Pancreas (tissue), 10 donors: ENCODE measurements at regions of chr7 and their contacts with region 1.

Region 1: DNA sequence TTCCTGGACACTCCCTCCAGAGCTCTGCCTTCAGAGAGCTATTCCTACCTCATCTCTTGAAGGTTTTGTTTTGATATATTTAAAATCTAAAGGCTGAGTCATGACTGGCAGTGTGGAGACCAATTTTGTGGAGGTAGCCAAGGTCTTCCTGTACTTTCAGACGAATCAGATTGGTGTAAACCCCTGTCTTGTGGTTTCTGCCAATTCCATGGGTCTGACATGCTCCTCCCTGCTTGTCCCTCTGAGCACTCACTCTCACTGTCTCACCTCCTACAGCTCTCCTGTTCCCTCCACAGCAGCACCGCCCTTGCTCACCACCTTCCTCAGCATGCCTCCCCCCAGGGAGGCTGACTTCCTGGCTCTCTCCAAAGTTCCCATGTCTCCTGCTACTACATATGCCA is 179.8 kb downstream of the NPSR1 start:
- DNase-seq: no peak
- ATAC-seq: peak in 2 of 4 donors; percentile 12 to 31
- H3K4me3 ChIP-seq: no peak overlapping the region
- H3K27ac ChIP-seq: no peak overlapping the region
- H3K4me1 ChIP-seq: no peaks in the 10 kb centered on the region
- H3K27me3 ChIP-seq: no peaks in the 10 kb centered on the region
- CTCF ChIP-seq: no peak

Region 2: DNA sequence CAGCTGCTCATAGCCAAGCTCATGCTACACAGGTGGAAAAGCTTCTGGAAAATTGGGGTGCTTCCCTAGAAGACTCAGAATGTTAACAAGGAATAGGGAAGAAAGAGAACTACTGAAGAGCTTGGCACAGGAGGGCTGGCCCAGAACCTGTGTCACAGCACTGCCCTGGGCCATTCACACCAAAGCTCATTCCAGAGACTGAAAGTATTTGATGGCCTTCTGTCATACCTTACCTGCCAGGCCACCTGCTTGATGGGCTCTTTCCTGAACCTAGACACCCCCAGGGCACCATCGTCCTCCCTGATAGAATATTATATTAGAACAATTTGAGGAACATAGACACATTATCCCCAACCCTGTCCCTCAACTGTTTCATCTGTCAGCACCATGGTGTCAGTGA is 155.7 kb before region 1 on chr7:
- intact Hi-C with region 1: loop called in 1 of 3 experiments (anchors 10 kb)
- DNase-seq: no peak
- ATAC-seq: no peak
- H3K4me3 ChIP-seq: no peak overlapping the region
- H3K27ac ChIP-seq: no peak overlapping the region
- H3K4me1 ChIP-seq: no peaks in the 10 kb centered on the region
- H3K27me3 ChIP-seq: no peaks in the 10 kb centered on the region
- CTCF ChIP-seq: no peak

Region 3: DNA sequence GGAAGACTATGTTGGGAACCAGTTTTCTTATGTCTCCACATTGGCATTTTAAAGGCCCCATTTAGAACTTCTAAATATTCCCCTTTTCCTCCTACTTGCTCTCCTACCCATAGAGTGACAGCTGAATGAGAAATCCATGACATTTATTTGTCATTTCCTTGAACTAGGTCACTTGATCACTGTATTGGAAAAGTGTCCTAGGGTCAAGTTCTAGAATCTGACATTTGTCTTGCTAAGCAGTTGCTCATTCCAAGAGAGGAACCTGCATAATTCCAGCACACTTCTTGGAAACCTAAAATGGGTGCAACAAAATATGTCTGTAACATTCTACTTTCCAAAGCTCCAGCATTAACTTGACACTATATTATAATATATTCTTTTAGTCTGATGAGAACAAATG is 203.1 kb after region 1 on chr7:
- intact Hi-C with region 1: no loop called
- DNase-seq: no peak
- ATAC-seq: no peak
- H3K4me3 ChIP-seq: no peak overlapping the region
- H3K27ac ChIP-seq: no peak overlapping the region
- H3K4me1 ChIP-seq: peaks cover 0 to 7% (median 0%) of the 10 kb centered on the region in 3 donors
- H3K27me3 ChIP-seq: no peaks in the 10 kb centered on the region
- CTCF ChIP-seq: no peak